Dendritic cell treated with granulocyte-macrophage colony-stimulating factor and Interleukin-4, amounts not matched to agents 40 ng/mL and 50 ng/mL, for 4 days (primary cell): ENCODE measurements at regions of chr12 and their contacts with region 1.

Region 1: DNA sequence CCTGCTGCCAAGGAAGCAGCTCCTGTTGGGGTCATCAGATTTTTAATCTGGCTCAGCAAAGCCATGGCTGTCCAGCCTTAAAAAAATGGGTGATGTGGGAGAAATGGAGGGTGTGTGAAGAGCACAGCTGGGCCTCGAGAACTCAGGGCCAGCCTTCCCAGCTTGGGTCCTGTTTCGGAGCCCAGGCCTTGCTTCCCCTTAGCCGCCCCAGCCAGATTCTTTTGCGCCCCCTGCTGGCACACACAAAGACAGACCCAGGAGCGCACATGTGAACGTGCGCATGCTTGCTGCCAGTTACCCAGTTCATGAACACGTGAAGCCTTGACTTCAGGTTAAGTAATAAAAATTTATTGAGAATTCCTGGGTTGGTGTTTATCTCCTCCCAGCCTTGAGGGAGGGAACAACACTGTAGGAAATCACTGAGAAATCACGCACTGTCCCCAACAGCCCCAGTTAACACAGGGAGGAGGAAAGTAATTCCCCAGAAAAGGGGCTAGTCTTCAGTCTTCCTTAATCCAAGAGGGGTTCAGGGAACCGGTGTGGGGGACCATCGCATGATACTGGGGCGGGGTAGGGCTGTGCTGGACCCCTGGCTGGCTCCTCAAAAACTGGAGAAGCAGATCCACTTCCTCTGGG is 5.3 kb downstream of the PHB2 start:
- H3K4me3 Mint-ChIP-seq: no peak overlapping the region
- H3K27ac Mint-ChIP-seq: peak overlapping the region; percentile 93
- H3K4me1 Mint-ChIP-seq: peaks cover 79% of the 10 kb centered on the region
- H3K27me3 Mint-ChIP-seq: no peaks in the 10 kb centered on the region

Region 2: GRCh38 chr12:6944381-6945186 is 20.6 kb before region 1 on chr12:
- intact Hi-C with region 1: loop called (anchors 1 kb)
- H3K4me3 Mint-ChIP-seq: peak overlapping the region; percentile 70
- H3K27ac Mint-ChIP-seq: peak overlapping the region; percentile 99
- H3K4me1 Mint-ChIP-seq: peaks cover 73% of the 10 kb centered on the region
- H3K27me3 Mint-ChIP-seq: no peaks in the 10 kb centered on the region

Region 3: GRCh38 chr12:6950811-6951540 is 14.2 kb before region 1 on chr12 and contains the start of gene PTPN6:
- intact Hi-C with region 1: loop called (anchors 1 kb)
- H3K4me3 Mint-ChIP-seq: peak within 1 kb of the TSS; percentile 95
- H3K27ac Mint-ChIP-seq: peak within 1 kb of the TSS; percentile 93
- H3K4me1 Mint-ChIP-seq: peaks cover 84% of the 10 kb centered on the region
- H3K27me3 Mint-ChIP-seq: no peaks in the 10 kb centered on the region

Region 4: GRCh38 chr12:7018350-7019042 is 53.4 kb after region 1 on chr12 and contains the start of gene LPCAT3:
- intact Hi-C with region 1: loop called (anchors 1 kb)
- H3K4me3 Mint-ChIP-seq: peak within 1 kb of the TSS; percentile 99
- H3K27ac Mint-ChIP-seq: peak within 1 kb of the TSS; percentile 80
- H3K4me1 Mint-ChIP-seq: peaks cover 49% of the 10 kb centered on the region
- H3K27me3 Mint-ChIP-seq: no peaks in the 10 kb centered on the region

Region 5: GRCh38 chr12:7769999-7770398 is 804.9 kb after region 1 on chr12:
- intact Hi-C with region 1: no loop called
- H3K4me3 Mint-ChIP-seq: no peak overlapping the region
- H3K27ac Mint-ChIP-seq: no peak overlapping the region
- H3K4me1 Mint-ChIP-seq: peaks cover 5% of the 10 kb centered on the region
- H3K27me3 Mint-ChIP-seq: no peaks in the 10 kb centered on the region